ENCODE measurements at regions of chr17 and their contacts with region 1.

Region 1: GRCh38 chr17:76121932-76122430 is 18.4 kb upstream of the EXOC7 start:
- DNase-seq: peak; percentile 35 to 67
- H3K4me3 ChIP-seq: peak overlapping the region; percentile 41 to 44 (median 43)
- H3K27ac ChIP-seq: peak overlapping the region in 2 of 5 donors; percentile 29 to 76
- H3K4me1 ChIP-seq: peaks cover 10 to 12% (median 10%) of the 10 kb centered on the region in 4 donors
- H3K27me3 ChIP-seq: no peaks in the 10 kb centered on the region
- CTCF ChIP-seq: no peak
- EP300 ChIP-seq: no peak
- POLR2A ChIP-seq: no peak

Region 2: GRCh38 chr17:76182016-76182764 is 60.2 kb after region 1 on chr17:
- intact Hi-C with region 1: loop called (anchors 10 kb)
- DNase-seq: peak; percentile 91 to 96
- H3K4me3 ChIP-seq: no peak overlapping the region
- H3K27ac ChIP-seq: peak overlapping the region in 1 of 5 donors; percentile 51
- H3K4me1 ChIP-seq: peaks cover 0 to 9% (median 7%) of the 10 kb centered on the region in 4 donors
- H3K27me3 ChIP-seq: no peaks in the 10 kb centered on the region
- CTCF ChIP-seq: peak in 5 of 7 experiments; percentile 76 to 92 (median 84)
- EP300 ChIP-seq: no peak
- POLR2A ChIP-seq: no peak

Region 3: DNA sequence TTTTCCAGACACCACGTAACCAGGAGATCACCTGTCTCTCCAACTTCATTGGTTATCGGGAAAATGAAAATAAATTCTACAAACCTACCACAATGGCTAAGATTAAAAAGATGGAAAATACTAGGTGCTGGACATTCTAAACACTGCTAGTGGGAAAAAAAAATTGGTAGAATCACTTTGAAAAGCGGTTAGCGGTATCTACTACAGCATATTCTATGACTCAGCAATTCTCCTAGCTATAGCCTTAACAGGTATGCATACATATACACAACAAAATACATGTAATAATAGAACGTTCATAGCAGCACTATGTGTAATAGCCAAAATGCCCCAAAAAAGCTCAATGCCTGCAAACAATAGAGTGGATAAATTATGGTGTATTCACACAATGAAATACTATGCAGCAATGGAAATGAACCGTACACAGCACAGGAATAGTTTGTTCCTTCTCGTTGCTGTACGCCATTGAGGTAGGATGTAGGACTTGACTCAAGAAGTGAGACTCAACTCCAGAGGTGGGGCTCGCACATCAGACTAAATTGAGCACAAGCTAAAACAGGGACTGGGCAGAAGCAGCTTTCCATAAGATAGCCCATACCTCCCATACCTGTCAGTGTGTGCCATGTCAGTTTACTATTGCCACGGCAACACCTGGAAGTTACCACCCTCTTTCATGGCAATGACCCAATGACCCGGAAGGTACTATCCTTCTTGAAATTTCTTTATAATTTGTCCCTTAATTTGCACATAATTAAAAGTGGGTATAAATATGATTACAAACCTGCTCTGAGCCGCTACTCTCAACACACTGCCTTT is 73.5 kb after region 1 on chr17:
- intact Hi-C with region 1: no loop called
- DNase-seq: no peak
- H3K4me3 ChIP-seq: no peak overlapping the region
- H3K27ac ChIP-seq: peak overlapping the region in 1 of 5 donors; percentile 53
- H3K4me1 ChIP-seq: peaks cover 0 to 28% (median 5%) of the 10 kb centered on the region in 4 donors
- H3K27me3 ChIP-seq: no peaks in the 10 kb centered on the region
- CTCF ChIP-seq: no peak
- EP300 ChIP-seq: no peak
- POLR2A ChIP-seq: no peak

Region 4: DNA sequence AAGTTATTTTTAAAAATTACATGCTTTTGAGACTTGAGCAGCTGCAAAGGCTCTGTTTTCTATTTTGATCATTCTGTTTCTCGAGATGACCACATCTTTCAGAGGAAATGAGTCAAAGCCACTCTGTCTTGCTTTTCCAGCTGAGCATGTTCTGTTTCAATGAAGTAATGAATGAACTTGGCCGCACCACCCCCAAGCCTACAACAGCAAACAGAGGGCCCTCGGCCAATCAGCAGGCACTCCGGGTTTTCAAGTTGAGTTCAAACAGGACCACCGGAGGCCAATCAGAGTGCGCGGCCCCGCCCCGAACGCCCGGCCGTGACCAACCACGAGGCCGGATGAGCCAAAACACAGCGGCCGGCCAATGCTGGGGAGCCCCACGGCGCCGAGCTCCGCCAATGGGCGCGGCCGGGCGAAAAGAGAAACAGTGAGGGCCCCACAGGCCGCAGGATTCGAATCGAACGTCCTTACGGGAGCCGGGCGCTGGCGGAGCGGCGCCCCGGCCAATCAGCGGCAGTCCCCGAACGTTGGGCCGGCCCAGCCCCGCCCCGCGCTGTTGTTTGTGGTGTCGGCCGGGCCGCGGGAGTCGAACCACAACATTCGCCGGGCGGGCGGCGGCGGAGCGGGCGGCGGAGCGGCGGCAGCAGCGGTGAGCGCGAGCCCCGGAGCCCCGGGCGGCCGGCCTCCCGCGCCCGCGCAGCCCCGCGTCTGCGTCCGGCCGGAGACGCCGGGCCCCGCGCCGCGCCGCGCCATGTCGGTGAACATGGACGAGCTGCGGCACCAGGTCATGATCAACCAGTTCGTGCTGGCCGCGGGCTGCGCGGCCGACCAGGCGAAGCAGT is 143.0 kb after region 1 on chr17 and contains the start of gene UBALD2:
- intact Hi-C with region 1: no loop called
- DNase-seq: peak; percentile 100
- H3K4me3 ChIP-seq: peak within 1 kb of the TSS; percentile 71 to 95 (median 84)
- H3K27ac ChIP-seq: peak within 1 kb of the TSS; percentile 87 to 100 (median 96)
- H3K4me1 ChIP-seq: peaks cover 76 to 87% (median 83%) of the 10 kb centered on the region in 4 donors
- H3K27me3 ChIP-seq: no peaks in the 10 kb centered on the region
- CTCF ChIP-seq: no peak
- EP300 ChIP-seq: no peak
- POLR2A ChIP-seq: peak in 1 of 4 donors; percentile 45
- total RNA-seq, gene UBALD2: 1.8 to 49.5 (median 9.9) TPM

Region 5: GRCh38 chr17:76278952-76279741 is 157.2 kb after region 1 on chr17:
- intact Hi-C with region 1: loop called (anchors 5 kb)
- DNase-seq: peak; percentile 92 to 95
- H3K4me3 ChIP-seq: no peak overlapping the region
- H3K27ac ChIP-seq: no peak overlapping the region
- H3K4me1 ChIP-seq: peaks cover 8 to 20% (median 15%) of the 10 kb centered on the region in 4 donors
- H3K27me3 ChIP-seq: no peaks in the 10 kb centered on the region
- CTCF ChIP-seq: peak in 6 of 7 experiments; percentile 80 to 99 (median 94)
- EP300 ChIP-seq: no peak
- POLR2A ChIP-seq: no peak